ENCODE measurements at regions of chr9 and their contacts with region 1.

Region 1: DNA sequence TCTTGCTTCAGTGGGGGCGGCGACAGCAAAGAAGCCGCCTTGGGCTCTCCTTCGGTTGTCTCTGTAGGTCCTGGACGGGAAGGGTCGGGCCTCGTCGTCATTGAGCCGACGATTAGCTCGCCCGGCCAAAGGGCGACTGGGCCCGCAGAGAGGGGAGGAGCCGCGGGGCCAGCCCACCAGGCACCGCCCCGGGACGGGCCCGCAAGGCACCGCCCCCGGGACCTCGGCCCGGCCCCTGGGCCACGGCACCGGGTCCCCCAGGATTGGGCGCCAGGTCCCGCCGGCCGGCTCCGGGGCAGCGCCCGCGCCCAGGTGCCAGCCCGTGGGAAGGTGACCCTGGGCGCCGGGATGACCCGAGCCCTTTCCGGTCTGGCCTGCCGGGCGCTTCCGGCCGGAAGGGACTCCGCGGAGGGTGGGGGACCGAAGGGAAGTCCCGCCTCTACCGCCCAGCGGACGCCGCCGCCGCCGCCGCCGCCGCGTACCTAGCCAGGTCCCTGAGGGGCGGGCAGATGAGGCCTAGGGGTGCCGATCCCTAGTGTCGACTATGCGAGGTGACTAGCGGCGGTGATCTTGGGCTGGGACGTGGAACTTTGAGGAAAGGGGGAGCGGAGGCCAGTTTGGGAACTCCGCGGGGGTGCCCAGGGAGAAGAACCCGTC is at the starts of genes GBA2 and RGP1:
- DNase-seq: peak; percentile 76
- H3K4me3 Mint-ChIP-seq: peak within 1 kb of the TSS; percentile 94
- H3K27ac Mint-ChIP-seq: peak within 1 kb of the TSS; percentile 91
- H3K4me1 Mint-ChIP-seq: peaks cover 52% of the 10 kb centered on the region
- H3K27me3 Mint-ChIP-seq: no peaks in the 10 kb centered on the region
- total RNA-seq, gene GBA2: 45.8 to 49.1 TPM
- total RNA-seq, gene RGP1: 29.1 to 29.5 TPM

Region 2: DNA sequence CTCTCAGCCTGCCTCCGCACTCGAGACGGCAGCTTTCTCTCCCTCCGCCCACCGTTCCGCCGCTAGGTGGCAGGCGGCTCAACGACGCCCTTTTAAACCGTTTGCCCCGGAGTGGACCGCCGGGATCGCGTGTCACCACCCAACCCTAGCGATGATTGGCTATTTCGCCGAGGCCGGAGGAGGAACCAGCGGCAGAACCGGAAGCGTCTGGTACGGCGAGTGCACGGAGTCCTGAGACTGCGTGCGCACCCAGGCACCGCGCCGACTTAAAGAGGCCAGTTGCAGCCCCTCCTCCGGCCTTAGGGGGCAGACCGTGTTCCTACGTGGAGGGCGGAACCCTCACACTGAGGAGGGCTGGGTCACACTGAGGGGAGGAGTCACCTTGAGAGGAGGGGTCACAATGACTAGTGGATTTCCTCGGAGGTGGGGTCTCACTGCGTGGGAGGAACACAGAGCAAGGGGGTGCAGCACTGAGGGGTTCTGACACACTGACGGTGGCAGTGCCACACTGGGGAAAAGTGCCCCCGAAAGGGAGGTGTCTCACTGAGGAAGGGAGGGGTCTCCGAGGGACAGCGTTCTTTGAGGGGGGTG is 144.9 kb before region 1 on chr9:
- CTCF ChIA-PET with region 1: interaction called, 11 read pairs
- POLR2A ChIA-PET with region 1: interaction called, 5 read pairs
- DNase-seq: peak; percentile 100
- H3K4me3 Mint-ChIP-seq: peak overlapping the region; percentile 96
- H3K27ac Mint-ChIP-seq: peak overlapping the region; percentile 99
- H3K4me1 Mint-ChIP-seq: peaks cover 30% of the 10 kb centered on the region
- H3K27me3 Mint-ChIP-seq: no peaks in the 10 kb centered on the region

Region 3: DNA sequence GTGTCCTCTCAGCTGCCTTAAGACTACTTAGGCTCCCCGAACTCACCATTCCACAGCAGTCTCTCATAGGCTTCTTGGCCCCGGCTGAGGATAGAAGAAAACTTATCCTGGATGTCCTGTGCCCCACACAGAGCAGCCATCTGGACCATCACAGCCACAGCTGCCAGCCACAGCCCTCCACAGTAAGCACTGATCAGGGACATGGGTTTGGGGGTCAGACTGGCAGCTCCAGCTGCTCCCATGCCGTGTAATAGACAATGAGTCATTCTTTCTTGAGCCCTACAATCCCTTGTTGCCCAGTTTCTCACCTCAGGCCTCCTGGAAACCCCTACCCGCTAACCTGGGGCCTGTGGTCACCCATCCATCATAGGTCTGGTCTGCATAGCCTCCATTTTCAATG is 10.8 kb before region 1 on chr9:
- CTCF ChIA-PET with region 1: interaction called, 98 read pairs
- POLR2A ChIA-PET with region 1: interaction called, 117 read pairs
- DNase-seq: no peak
- H3K4me3 Mint-ChIP-seq: no peak overlapping the region
- H3K27ac Mint-ChIP-seq: no peak overlapping the region
- H3K4me1 Mint-ChIP-seq: peaks cover 36% of the 10 kb centered on the region
- H3K27me3 Mint-ChIP-seq: no peaks in the 10 kb centered on the region

Region 4: GRCh38 chr9:35826071-35826701 is 77.2 kb after region 1 on chr9:
- CTCF ChIA-PET with region 1: interaction called, 16 read pairs
- POLR2A ChIA-PET with region 1: no interaction called
- DNase-seq: peak; percentile 31
- H3K4me3 Mint-ChIP-seq: no peak overlapping the region
- H3K27ac Mint-ChIP-seq: no peak overlapping the region
- H3K4me1 Mint-ChIP-seq: peaks cover 23% of the 10 kb centered on the region
- H3K27me3 Mint-ChIP-seq: peaks cover 9% of the 10 kb centered on the region

Region 5: GRCh38 chr9:35976726-35977125 is 227.7 kb after region 1 on chr9:
- CTCF ChIA-PET with region 1: no interaction called
- POLR2A ChIA-PET with region 1: no interaction called
- DNase-seq: no peak
- H3K4me3 Mint-ChIP-seq: no peak overlapping the region
- H3K27ac Mint-ChIP-seq: no peak overlapping the region
- H3K4me1 Mint-ChIP-seq: peaks cover 4% of the 10 kb centered on the region
- H3K27me3 Mint-ChIP-seq: peaks cover 81% of the 10 kb centered on the region